ENCODE measurements at regions of chr16 and their contacts with region 1.

Region 1: GRCh38 chr16:70770626-70771552 is 30.1 kb downstream of the VAC14 start:
- DNase-seq: peak; percentile 82
- H3K4me3 Mint-ChIP-seq: no peak overlapping the region
- H3K27ac Mint-ChIP-seq: peak overlapping the region; percentile 39
- H3K4me1 Mint-ChIP-seq: peaks cover 11% of the 10 kb centered on the region
- H3K27me3 Mint-ChIP-seq: no peaks in the 10 kb centered on the region

Region 2: DNA sequence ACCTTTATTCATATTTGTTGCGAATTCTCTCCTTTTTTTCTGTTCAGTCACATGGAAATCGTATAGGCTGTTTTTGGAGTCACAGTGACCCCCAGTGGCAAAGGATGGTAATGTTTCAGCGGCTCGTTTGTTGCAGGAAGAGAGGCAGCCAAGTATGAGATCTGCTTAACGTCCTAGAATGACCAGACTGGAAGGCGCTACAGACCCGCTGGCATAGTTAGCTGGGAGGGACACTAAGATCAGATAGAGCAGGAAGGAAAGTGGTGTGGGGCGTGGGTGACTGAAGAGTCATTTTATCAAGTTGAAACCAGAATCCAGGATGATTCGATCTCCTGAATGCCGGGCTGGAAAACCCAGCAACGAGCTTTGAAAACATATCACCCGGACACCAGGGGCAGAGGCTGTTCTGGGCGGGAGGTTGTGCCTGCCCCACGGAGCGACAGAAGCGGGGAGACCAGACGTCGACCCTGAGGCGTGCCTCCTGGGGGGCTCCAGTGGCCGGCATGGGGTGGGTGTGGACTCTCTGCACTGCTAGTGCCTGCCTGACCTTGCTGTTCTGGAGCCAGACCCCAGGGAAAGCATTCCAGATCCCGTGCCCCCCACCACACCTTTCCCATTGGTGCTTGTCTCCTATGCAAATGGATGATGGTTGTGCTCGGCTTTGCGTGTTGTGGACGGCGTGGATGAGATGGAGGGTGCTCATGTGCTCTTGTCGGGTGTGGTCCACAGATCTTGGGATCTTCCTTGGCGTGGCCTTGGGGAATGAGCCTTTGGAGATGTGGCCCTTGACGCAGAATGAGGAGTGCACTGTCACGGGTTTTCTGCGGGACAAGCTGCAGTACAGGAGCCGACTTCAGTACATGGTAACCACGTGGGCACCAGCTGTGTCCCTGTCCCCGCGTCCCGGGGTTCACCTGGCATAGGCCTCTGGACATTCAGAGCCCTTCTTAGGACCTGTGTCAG is 116.8 kb before region 1 on chr16:
- CTCF ChIA-PET with region 1: interaction called, 53 read pairs
- DNase-seq: peak; percentile 89
- H3K4me3 Mint-ChIP-seq: peak overlapping the region; percentile 6
- H3K27ac Mint-ChIP-seq: no peak overlapping the region
- H3K4me1 Mint-ChIP-seq: peaks cover 5% of the 10 kb centered on the region
- H3K27me3 Mint-ChIP-seq: peaks cover 21% of the 10 kb centered on the region

Region 3: DNA sequence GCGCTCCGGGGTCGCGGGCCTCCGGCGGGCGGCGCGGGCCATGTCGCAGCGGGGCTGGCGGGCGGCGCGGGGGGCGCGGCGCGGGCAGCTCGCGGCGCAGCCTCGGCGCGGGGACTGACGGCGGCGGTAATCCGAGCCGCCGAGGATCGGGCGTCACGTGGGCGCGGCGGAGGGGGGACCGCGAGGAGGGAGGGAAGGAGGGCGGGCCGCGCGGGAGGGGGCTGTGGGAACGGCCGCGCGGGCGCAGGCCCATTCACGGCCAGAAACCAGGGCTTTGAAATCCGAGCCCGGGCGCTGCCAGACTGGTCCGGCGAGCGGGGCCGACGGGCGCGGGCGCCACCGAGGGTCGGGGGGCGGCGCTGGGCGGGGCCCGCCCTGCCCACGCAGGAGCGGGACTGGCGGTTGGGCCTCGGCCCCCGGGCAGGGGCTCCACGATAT is 84.9 kb before region 1 on chr16 and contains the start of gene MTSS2:
- CTCF ChIA-PET with region 1: interaction called, 87 read pairs
- DNase-seq: peak; percentile 73
- H3K4me3 Mint-ChIP-seq: peak within 1 kb of the TSS; percentile 76
- H3K27ac Mint-ChIP-seq: peak within 1 kb of the TSS; percentile 52
- H3K4me1 Mint-ChIP-seq: peaks cover 25% of the 10 kb centered on the region
- H3K27me3 Mint-ChIP-seq: peaks cover 48% of the 10 kb centered on the region

Region 4: GRCh38 chr16:70737377-70738082 is 33.4 kb before region 1 on chr16:
- CTCF ChIA-PET with region 1: interaction called, 26 read pairs
- DNase-seq: peak; percentile 93
- H3K4me3 Mint-ChIP-seq: peak overlapping the region; percentile 79
- H3K27ac Mint-ChIP-seq: peak overlapping the region; percentile 100
- H3K4me1 Mint-ChIP-seq: peaks cover 89% of the 10 kb centered on the region
- H3K27me3 Mint-ChIP-seq: no peaks in the 10 kb centered on the region

Region 5: GRCh38 chr16:70759666-70760065 is 11.2 kb before region 1 on chr16:
- CTCF ChIA-PET with region 1: interaction called, 35 read pairs
- DNase-seq: no peak
- H3K4me3 Mint-ChIP-seq: no peak overlapping the region
- H3K27ac Mint-ChIP-seq: peak overlapping the region; percentile 20
- H3K4me1 Mint-ChIP-seq: peaks cover 21% of the 10 kb centered on the region
- H3K27me3 Mint-ChIP-seq: no peaks in the 10 kb centered on the region

Measured in activated naive CD4-positive, alpha-beta T cell treated with anti-CD3 and anti-CD28 coated beads, Interleukin-2, amount 10 ng/mL, durations not matched to agents 7 days and 5 days (primary cell).